ENCODE measurements at regions of chr3 and their contacts with region 1.

Region 1: DNA sequence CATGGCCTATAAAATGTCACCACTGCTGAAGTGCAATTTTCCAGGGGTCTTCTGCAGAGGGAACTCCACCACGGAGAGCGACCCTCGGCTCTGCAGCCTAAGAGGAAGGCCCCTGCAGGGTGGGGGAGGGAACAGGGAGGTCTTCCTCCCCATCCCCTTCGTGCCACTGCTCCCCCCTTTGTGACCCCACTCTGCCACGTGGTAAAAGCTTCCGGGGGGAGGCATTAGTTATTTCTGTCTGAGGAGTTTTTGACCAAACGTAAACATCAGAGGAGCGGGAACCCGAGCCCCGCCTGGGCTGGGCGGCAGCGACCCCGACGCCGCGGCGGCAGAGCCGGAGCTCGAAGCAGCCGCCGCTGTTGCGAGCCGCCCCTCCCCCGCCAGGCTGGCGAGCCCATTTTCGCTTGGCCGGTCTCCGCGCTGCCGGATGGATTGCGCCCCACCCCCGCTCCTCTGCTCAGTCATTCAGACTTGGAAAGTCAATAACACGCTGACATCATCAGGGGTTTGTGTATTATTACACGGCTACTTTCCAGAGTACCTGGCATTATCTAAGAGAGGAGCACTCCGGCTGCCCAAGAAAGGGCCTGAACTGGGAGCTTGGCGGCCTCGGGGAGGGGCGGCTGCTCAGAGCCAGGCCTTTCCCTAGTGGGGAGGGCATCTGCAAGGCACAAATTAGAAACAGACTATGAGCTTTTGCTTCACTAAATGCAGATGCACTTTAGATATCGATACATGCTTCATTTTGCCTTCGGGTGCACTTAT is 162.5 kb upstream of the TBL1XR1 start:
- DNase-seq: peak; percentile 90 to 97 (median 96)
- ATAC-seq: peak; percentile 83 to 92
- H3K4me3 Mint-ChIP-seq: peak overlapping the region; percentile 88 to 97 (median 94)
- H3K27ac Mint-ChIP-seq: peak overlapping the region; percentile 98 to 100 (median 99)
- H3K4me1 Mint-ChIP-seq: peaks cover 25 to 62% (median 55%) of the 10 kb centered on the region in 4 donors
- H3K27me3 Mint-ChIP-seq: peaks cover 0 to 3% (median 0%) of the 10 kb centered on the region in 5 donors

Region 2: GRCh38 chr3:177050501-177051237 is 309.1 kb before region 1 on chr3:
- POLR2A ChIA-PET with region 1: interaction called, 25 read pairs
- DNase-seq: peak in 4 of 10 donors; percentile 14 to 66 (median 59)
- ATAC-seq: peak; percentile 83 to 84
- H3K4me3 Mint-ChIP-seq: no peak overlapping the region
- H3K27ac Mint-ChIP-seq: peak overlapping the region in 5 of 10 donors; percentile 19 to 68 (median 55)
- H3K4me1 Mint-ChIP-seq: peaks cover 8 to 18% (median 14%) of the 10 kb centered on the region in 4 donors
- H3K27me3 Mint-ChIP-seq: no peaks in the 10 kb centered on the region

Region 3: GRCh38 chr3:177197041-177197727 is 162.6 kb before region 1 on chr3 and contains the start of gene TBL1XR1:
- POLR2A ChIA-PET with region 1: interaction called, 255 read pairs
- DNase-seq: peak; percentile 82 to 95 (median 90)
- ATAC-seq: peak; percentile 61 to 67
- H3K4me3 Mint-ChIP-seq: peak within 1 kb of the TSS; percentile 91 to 99 (median 98)
- H3K27ac Mint-ChIP-seq: peak within 1 kb of the TSS; percentile 93 to 99 (median 98)
- H3K4me1 Mint-ChIP-seq: peaks cover 20 to 71% (median 59%) of the 10 kb centered on the region in 4 donors
- H3K27me3 Mint-ChIP-seq: peaks cover 0 to 4% (median 0%) of the 10 kb centered on the region in 5 donors
- polyA plus RNA-seq, gene TBL1XR1: 23.4 to 34.7 (median 33.7) TPM

Region 4: GRCh38 chr3:177300039-177300833 is 59.5 kb before region 1 on chr3:
- POLR2A ChIA-PET with region 1: interaction called, 11 read pairs
- DNase-seq: no peak
- ATAC-seq: no peak
- H3K4me3 Mint-ChIP-seq: no peak overlapping the region
- H3K27ac Mint-ChIP-seq: peak overlapping the region in 1 of 10 donors; percentile 7
- H3K4me1 Mint-ChIP-seq: peaks cover 0 to 12% (median under 1%) of the 10 kb centered on the region in 4 donors
- H3K27me3 Mint-ChIP-seq: no peaks in the 10 kb centered on the region

Region 5: GRCh38 chr3:177349384-177349783 is 10.4 kb before region 1 on chr3:
- POLR2A ChIA-PET with region 1: no interaction called
- DNase-seq: no peak
- ATAC-seq: no peak
- H3K4me3 Mint-ChIP-seq: no peak overlapping the region
- H3K27ac Mint-ChIP-seq: peak overlapping the region in 2 of 10 donors; percentile 46 to 56
- H3K4me1 Mint-ChIP-seq: peaks cover 10 to 58% (median 24%) of the 10 kb centered on the region in 4 donors
- H3K27me3 Mint-ChIP-seq: no peaks in the 10 kb centered on the region

Region 6: GRCh38 chr3:177538750-177539730 is 179.3 kb after region 1 on chr3:
- POLR2A ChIA-PET with region 1: interaction called, 10 read pairs
- DNase-seq: peak in 4 of 10 donors; percentile 25 to 52 (median 36)
- ATAC-seq: peak; percentile 83 to 86
- H3K4me3 Mint-ChIP-seq: peak overlapping the region; percentile 49 to 83 (median 78)
- H3K27ac Mint-ChIP-seq: peak overlapping the region; percentile 57 to 93 (median 86)
- H3K4me1 Mint-ChIP-seq: peaks cover 29 to 63% (median 48%) of the 10 kb centered on the region in 4 donors
- H3K27me3 Mint-ChIP-seq: no peaks in the 10 kb centered on the region

Region 7: DNA sequence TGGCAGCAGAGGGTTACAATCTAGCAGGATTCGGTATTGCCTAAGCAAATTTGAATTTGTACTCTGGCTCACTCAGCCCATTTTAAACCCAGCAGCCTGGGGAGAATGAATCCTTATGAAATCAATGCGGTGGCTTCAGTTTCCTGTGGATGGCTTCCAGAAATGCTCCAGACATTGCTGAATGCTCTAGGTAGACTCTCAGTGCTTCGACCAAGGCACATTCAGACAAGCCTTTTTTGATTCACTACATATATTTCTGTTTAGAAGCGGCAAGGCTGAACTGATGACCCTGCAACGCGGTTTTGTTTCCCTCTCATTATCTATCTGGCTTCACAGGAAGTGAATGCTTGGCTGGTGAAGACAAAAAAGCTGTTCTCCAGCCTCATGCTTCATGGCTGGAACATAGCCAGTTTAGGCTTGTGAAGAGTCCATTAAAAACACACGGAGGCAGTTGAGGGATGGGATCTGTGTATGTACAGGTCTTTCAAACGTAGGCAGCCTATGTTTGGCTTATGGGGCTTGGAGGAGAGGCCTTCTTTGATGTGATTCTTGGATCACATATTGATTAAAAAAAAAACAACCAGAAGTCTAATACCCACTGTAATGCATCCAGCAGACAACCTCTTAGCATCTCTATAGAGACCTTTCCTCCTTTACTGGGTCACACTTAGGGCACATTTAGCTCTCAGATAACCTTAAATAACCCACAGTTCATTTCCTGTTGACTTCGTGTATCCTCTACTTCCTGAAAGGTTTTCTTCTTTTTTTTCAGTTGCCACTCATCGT is 237.7 kb after region 1 on chr3:
- POLR2A ChIA-PET with region 1: interaction called, 15 read pairs
- DNase-seq: peak in 6 of 10 donors; percentile 8 to 70 (median 39)
- ATAC-seq: peak; percentile 88 to 95
- H3K4me3 Mint-ChIP-seq: peak overlapping the region; percentile 68 to 85 (median 78)
- H3K27ac Mint-ChIP-seq: peak overlapping the region; percentile 87 to 97 (median 95)
- H3K4me1 Mint-ChIP-seq: peaks cover 36 to 81% (median 78%) of the 10 kb centered on the region in 4 donors
- H3K27me3 Mint-ChIP-seq: no peaks in the 10 kb centered on the region